ENCODE measurements at regions of chr2 and their contacts with region 1.

Region 1: DNA sequence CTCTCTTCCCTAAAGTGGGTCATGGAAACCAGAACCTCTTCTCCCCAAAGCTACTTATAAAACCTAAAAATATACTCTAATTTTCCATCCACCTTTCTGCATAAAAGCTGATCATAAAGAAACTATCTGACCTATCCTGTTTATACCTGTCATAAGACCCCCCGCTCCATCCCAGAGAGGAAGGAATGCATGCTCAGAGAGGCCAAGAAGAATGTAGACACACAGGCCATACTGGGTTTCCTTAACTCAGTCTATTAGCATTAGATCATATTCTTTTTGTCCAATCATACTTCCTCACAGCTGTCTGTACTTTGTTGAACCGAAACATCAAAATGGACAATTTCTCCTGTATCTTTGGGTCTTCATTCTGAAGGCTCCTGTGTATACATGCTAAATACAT is 52.3 kb downstream of the B3GNT2 start:
- DNase-seq: no peak
- ATAC-seq: no peak
- H3K4me3 ChIP-seq: no peak overlapping the region
- H3K27ac ChIP-seq: no peak overlapping the region
- H3K4me1 ChIP-seq: no peaks in the 10 kb centered on the region
- H3K27me3 ChIP-seq: no peaks in the 10 kb centered on the region
- CTCF ChIP-seq: no peak
- POLR2A ChIP-seq: no peak

Region 2: GRCh38 chr2:62306751-62307468 is 58.7 kb after region 1 on chr2:
- intact Hi-C with region 1: loop called in 1 of 10 experiments (anchors 10 kb)
- DNase-seq: no peak
- ATAC-seq: peak in 1 of 4 donors; percentile 29
- H3K4me3 ChIP-seq: no peak overlapping the region
- H3K27ac ChIP-seq: peak overlapping the region in 7 of 12 donors; percentile 4 to 61 (median 22)
- H3K4me1 ChIP-seq: peaks cover 6 to 82% (median 47%) of the 10 kb centered on the region in 12 donors
- H3K27me3 ChIP-seq: no peaks in the 10 kb centered on the region
- CTCF ChIP-seq: no peak
- POLR2A ChIP-seq: no peak

Measured in heart left ventricle (tissue), 16 donors.